Right ventricle myocardium inferior (tissue), 1 donor: ENCODE measurements at regions of chr22 and their contacts with region 1.

Region 1: DNA sequence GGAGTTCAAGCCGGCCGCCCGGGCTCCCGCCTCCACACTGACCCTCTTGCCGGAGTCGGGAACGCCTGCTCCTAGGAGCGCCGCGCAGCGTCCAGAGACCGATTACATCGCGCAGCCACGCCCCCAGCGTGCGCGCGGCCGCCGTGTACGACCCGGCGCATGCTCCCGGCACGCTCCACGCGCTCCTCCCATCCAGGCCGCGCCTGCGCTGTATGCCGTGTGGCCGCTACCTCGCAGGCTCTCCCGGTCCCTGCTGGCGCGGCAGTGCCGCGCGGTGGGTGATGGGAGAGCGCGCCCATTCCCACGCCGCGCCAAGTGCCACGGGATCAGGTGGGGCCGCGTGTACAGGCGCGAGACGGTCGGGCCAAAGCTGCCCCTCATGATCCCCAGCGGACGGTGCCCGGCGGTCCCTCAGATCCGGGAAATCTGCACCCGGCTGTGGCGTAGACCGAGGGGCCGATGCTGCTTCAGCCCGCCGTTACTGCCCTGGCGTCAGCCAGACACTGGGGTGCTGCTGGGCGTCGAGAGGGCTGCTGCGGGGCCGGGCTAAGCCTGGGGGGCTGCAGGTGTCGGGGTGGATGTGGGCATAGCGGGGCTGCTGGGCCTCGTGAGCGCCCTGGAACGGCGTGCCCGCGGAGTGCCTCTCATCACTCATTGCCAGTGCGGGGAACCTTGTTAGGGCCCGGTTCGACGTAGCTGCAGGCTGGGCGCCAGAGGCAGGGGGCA is at the starts of genes GNB1L and RTL10:
- DNase-seq: peak; percentile 100
- ATAC-seq: peak; percentile 99
- total RNA-seq, gene GNB1L: 1.9 TPM
- total RNA-seq, gene RTL10: 8.5 TPM

Region 2: DNA sequence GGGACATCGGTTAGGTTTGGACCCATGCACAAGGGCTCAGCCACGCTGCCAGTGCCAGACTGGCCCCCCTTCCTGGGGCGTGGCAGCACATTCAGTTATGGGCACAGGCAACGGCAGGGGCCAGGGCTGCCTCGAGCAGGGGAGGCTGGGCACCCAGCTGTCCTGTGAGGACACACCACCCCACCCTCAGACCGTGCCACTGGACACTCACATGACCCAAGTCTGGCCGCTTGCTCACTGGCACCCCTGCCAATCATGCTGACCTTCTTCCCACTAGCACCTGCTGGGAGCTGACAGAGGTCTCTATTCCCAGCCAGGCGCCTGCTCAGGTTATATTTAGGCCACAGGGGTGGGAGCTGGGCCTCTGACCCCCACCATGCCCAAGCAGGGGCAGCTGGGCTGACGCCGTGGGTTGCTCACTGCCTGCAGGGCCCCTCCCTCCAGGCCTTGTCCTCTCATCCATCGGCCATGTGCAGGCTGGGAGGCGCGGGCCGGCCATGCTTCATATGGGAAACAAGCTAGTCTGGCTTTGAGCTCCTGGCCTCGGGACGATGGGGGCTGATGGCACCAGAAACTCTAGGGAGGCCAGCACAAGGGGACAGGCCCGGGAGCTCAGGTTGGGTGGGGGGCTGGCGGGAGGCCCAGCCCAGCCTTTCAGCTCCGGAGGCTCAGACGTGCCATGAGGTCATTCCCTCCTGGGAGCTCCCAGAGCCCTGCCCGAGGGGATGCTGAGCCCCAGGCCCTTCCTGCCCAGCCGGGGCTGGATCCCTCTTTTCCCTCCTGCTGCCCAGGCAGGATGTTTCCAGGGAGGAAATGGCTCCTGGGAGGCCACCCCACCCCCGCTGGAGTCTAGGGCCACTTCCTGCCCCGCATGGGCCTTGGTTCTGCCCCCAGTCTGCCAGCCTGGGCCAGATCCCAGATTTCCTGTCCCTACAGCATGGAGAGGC is 109.5 kb before region 1 on chr22:
- intact Hi-C with region 1: loop called (anchors 5 kb)
- DNase-seq: peak; percentile 85
- ATAC-seq: peak; percentile 90

Region 3: GRCh38 chr22:19879695-19880506 is 25.0 kb after region 1 on chr22:
- intact Hi-C with region 1: loop called (anchors 2 kb)
- DNase-seq: peak; percentile 60
- ATAC-seq: no peak

Region 4: GRCh38 chr22:20116951-20117645 is 262.2 kb after region 1 on chr22 and contains the start of gene TRMT2A:
- intact Hi-C with region 1: loop called (anchors 10 kb)
- DNase-seq: peak; percentile 99
- ATAC-seq: peak; percentile 95
- total RNA-seq, gene TRMT2A: 24.5 TPM